Dorsolateral prefrontal cortex (tissue), 120 donors: ENCODE measurements at regions of chr5 and their contacts with region 1.

Region 1: DNA sequence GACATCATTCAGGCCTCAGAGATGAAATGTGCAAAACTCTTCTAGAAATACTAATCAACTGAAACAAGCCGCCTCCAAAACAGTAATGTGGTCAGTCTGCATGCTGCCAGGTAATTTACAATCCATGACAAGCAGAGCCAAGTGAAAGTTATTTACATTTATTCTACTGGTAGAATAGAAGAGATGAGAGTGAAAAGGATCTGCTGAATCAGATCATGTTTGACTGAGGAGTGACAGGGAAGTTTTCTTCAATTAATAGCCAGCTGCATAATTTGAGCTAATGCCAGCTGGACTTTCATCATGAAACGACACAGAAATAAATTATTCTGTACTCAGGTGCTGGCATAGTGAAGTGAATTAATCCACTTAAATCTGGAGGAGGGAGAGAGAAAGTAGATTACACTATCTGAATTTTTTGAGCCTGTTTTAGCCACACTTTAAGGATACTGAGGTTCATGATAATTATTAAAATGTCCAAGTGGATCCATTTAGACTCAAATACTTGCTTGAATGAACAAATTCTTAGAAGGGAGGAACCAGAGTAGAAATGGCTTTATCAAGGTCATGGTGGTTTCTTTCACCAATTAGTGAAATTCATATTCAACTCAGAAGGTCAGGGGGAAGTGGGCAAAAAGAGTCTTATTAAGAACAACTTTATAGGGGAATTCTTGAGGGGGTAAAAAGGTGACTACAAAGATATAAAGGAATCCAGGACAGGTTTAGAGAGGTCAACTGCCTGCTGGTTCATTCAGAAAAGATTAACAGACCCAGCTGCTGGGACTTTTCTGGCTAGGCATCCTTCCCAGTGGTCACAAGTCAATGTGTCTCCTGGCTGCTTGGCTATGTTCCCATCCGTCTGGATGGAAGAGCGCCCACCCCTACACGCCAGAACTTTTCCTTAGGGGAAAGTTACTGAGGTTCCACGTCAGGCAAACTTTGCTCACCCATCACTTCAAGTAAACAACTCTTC is 350.4 kb downstream of the PDE4D start:
- DNase-seq: peak in 3 of 10 donors; percentile 22 to 35 (median 31)
- H3K4me3 ChIP-seq: no peak overlapping the region
- H3K27ac ChIP-seq: peak overlapping the region in 56 of 59 donors; percentile 1 to 86 (median 57)
- H3K27me3 ChIP-seq: no peaks in the 10 kb centered on the region
- CTCF ChIP-seq: no peak

Region 2: DNA sequence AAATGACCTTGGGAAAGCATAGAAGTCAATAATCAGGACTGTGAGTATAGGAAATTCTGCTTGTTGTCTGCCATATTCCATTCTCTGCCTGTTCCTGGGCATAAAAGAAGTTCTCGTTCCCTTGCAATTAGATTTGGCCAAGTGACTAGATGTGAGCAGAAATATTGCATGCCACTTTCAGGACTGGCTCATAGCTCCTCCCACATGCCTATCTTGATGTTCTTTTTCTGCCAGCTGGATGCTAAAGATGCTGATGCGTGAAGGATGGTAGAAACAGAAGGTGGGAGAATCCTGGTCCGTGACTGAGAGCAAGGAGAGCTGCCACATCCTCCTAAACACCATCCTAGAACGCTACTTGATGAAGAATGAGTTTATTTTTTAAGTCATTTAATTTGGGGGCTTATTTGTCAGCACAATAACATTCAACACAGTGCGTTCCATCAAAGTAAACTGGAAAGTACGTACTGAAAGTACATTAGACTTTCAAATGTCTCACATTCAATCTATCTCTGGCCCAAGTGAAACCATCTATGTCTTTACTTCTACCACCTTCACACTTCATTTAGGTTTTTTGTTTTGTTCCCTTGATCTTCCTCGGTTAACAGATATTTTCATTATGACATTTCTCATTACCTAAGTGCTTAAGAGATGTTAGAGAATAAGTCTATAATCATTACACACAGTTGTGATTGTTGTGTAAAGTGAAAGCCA is 311.8 kb before region 1 on chr5:
- intact Hi-C with region 1: no loop called
- DNase-seq: no peak
- H3K4me3 ChIP-seq: no peak overlapping the region
- H3K27ac ChIP-seq: peak overlapping the region in 1 of 59 donors; percentile 6
- H3K27me3 ChIP-seq: no peaks in the 10 kb centered on the region
- CTCF ChIP-seq: no peak

Region 3: DNA sequence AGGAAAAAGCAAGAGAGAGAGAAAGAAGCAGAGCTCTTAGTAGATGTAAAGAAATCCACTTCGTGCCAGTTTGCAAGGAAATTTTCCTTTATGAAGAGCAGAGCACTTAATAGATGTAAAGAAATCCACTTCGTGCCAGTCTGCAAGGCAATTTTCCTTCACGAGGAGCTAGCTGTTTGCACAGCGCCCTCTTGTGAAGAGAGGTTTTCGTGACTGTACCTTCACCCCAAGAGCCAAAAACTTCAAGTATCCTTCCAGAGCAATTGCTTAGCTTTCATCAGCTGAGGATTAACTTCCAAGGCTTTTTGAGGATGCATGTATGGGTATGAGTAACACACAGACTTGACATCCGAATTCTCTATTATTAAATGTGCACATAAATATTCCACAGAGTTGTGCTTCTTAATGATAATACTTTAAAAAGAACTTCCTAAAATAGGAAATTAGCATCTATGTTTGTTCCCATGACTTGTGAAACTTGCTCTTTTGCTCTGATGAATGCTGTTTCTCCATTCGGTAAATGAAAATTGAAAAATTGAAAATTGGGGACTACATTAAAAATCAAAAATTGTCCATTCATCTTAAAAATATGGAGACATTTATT is 175.2 kb before region 1 on chr5:
- intact Hi-C with region 1: no loop called
- DNase-seq: peak in 9 of 10 donors; percentile 20 to 68 (median 59)
- H3K4me3 ChIP-seq: peak overlapping the region in 13 of 59 donors; percentile 1 to 45 (median 18)
- H3K27ac ChIP-seq: peak overlapping the region in 1 of 59 donors; percentile 2
- H3K27me3 ChIP-seq: no peaks in the 10 kb centered on the region
- CTCF ChIP-seq: peak; percentile 57 to 93 (median 79)

Region 4: DNA sequence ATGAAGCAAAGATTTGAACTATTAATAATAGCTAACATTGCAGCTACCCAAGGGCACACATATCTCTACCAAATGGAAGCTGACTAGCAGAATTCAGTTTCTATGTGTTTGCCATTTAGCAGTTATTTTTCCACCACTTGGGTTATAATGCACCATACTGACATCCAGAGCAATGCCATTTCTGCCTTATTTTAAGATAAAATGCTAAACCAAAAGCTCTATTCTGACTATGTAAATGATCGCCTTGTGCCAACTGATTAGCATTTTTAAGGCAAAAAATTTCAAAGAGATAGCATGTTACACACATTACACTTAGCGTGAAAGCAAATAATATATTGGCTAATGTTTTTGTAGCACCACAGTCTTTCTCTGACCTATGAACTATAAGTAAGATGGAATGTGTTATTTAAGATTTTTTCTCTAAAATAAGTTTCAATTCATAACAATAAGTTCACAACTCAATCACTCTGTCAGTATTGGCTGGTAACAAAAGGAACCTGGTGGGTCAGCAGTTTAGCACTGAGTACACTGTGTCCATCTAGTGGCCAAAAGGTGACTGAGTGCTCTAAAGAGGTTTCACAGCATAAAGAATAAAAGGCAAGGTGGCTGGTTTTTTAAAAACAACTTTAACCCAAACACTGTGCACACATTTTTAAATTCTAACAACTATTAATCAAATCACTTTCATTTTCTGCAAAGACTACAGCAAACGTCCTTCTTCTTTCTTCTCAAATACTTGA is 93.1 kb before region 1 on chr5:
- intact Hi-C with region 1: no loop called
- DNase-seq: no peak
- H3K4me3 ChIP-seq: no peak overlapping the region
- H3K27ac ChIP-seq: peak overlapping the region in 5 of 59 donors; percentile 14 to 54 (median 24)
- H3K27me3 ChIP-seq: no peaks in the 10 kb centered on the region
- CTCF ChIP-seq: peak in 5 of 56 donors; percentile 14 to 23 (median 16)

Region 5: DNA sequence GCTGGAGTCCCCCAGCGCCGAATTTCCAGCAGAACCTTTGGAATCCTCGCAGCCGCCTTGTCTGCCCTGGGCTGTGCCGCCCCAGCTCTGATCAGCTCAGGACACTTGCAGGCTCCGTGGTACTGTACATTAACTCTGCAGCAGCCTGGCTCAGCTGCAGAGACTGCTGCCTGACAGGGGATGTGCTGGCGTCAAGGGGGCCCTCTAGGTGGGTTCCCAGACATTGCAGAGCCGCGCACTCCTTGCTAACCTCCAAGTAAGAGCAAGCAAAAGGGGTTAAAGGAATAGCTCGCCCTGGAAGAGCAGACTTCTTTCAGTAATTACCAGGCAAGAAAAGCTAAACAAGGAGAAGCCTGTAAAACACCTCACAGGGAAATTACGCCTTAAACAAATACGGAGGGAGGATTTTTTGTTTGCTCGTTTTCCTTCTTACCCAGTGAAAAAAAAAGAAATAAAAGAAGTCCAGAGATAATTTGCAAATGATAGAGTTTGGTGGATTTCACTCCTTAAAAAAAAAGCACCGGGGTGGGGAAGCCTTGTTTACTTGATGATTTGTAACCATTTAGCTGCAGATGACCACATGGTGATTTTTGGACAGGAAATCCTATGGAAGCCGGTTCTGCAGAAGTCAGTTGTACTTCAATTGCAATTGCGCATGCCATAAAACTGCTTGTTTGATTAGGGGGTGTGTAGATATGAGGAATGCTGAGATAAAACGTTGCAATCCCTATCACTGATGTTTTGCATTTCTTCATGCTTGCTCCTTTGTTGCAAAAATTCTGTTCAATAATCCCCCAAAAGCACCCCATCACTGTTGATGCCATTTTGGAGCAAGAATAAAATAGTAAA is 44.6 kb after region 1 on chr5:
- intact Hi-C with region 1: loop called in 1 of 2 experiments (anchors 5 kb)
- DNase-seq: peak; percentile 64 to 92 (median 89)
- H3K4me3 ChIP-seq: peak overlapping the region; percentile 41 to 82 (median 67)
- H3K27ac ChIP-seq: peak overlapping the region in 55 of 59 donors; percentile 5 to 85 (median 66)
- H3K27me3 ChIP-seq: no peaks in the 10 kb centered on the region
- CTCF ChIP-seq: peak in 45 of 56 donors; percentile 2 to 57 (median 33)